ENCODE measurements at regions of chr7 and their contacts with region 1.

Region 1: GRCh38 chr7:100563809-100564400 is 9.8 kb downstream of the SAP25 start:
- DNase-seq: peak in 1 of 2 donors; percentile 59
- ATAC-seq: peak; percentile 33 to 59
- H3K4me3 ChIP-seq: no peak overlapping the region
- H3K27ac ChIP-seq: no peak overlapping the region
- H3K4me1 ChIP-seq: no peaks in the 10 kb centered on the region
- H3K27me3 ChIP-seq: no peaks in the 10 kb centered on the region
- CTCF ChIP-seq: peak; percentile 81 to 94 (median 89)
- POLR2A ChIP-seq: no peak

Region 2: GRCh38 chr7:100469227-100470044 is 94.5 kb before region 1 on chr7:
- in situ Hi-C with region 1: loop called in 3 of 4 experiments (anchors 5 to 25 kb)
- intact Hi-C with region 1: loop called (anchors 1 kb)
- DNase-seq: peak; percentile 67 to 80
- ATAC-seq: peak; percentile 76 to 80
- H3K4me3 ChIP-seq: no peak overlapping the region
- H3K27ac ChIP-seq: peak overlapping the region in 1 of 4 donors; percentile 52
- H3K4me1 ChIP-seq: peaks cover 7 to 18% of the 10 kb centered on the region in 2 donors
- H3K27me3 ChIP-seq: no peaks in the 10 kb centered on the region
- CTCF ChIP-seq: peak; percentile 90 to 98 (median 95)
- POLR2A ChIP-seq: no peak

Region 3: GRCh38 chr7:100691676-100692577 is 128.0 kb after region 1 on chr7:
- in situ Hi-C with region 1: no loop called
- intact Hi-C with region 1: loop called (anchors 2 kb)
- DNase-seq: peak; percentile 59 to 68
- ATAC-seq: peak; percentile 55 to 73
- H3K4me3 ChIP-seq: peak overlapping the region; percentile 37 to 89 (median 71)
- H3K27ac ChIP-seq: peak overlapping the region; percentile 69 to 84 (median 77)
- H3K4me1 ChIP-seq: peaks cover 44 to 48% of the 10 kb centered on the region in 2 donors
- H3K27me3 ChIP-seq: no peaks in the 10 kb centered on the region
- CTCF ChIP-seq: peak; percentile 78 to 93 (median 89)
- POLR2A ChIP-seq: no peak

Region 4: GRCh38 chr7:100726996-100727761 is 163.3 kb after region 1 on chr7:
- in situ Hi-C with region 1: no loop called
- intact Hi-C with region 1: loop called (anchors 1 kb)
- DNase-seq: no peak
- ATAC-seq: no peak
- H3K4me3 ChIP-seq: no peak overlapping the region
- H3K27ac ChIP-seq: no peak overlapping the region
- H3K4me1 ChIP-seq: no peaks in the 10 kb centered on the region
- H3K27me3 ChIP-seq: peaks cover 0 to 7% (median 4%) of the 10 kb centered on the region in 3 donors
- CTCF ChIP-seq: no peak
- POLR2A ChIP-seq: no peak

Measured in gastrocnemius medialis (tissue), 4 donors.